Calu3 (cell line): ENCODE measurements at regions of chr20 and their contacts with region 1.

Region 1: DNA sequence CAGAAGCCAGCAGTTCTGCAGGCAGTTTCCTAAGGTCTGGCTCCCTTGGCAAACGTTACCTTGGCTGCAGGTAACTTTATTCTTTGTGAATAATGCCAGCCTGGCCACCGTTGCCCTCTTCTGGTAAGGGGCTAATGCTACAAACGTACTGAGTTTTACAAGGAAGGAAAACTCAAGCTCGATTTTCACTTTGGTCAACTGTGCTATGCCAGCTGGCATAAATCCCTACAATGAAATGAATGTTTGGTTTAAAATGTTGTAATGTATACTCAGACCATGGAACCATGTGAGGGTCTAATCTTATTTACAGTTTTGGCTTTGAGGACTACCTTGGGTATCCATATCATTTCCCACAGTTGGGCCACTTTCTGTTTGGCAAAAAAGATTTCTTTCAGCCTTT is 101.4 kb downstream of the SLX4IP start:
- DNase-seq: peak; percentile 35
- H3K4me3 Mint-ChIP-seq: no peak overlapping the region
- H3K27ac Mint-ChIP-seq: no peak overlapping the region
- H3K4me1 Mint-ChIP-seq: peaks cover 16% of the 10 kb centered on the region
- H3K27me3 Mint-ChIP-seq: no peaks in the 10 kb centered on the region
- CTCF ChIP-seq: peak; percentile 23

Region 2: DNA sequence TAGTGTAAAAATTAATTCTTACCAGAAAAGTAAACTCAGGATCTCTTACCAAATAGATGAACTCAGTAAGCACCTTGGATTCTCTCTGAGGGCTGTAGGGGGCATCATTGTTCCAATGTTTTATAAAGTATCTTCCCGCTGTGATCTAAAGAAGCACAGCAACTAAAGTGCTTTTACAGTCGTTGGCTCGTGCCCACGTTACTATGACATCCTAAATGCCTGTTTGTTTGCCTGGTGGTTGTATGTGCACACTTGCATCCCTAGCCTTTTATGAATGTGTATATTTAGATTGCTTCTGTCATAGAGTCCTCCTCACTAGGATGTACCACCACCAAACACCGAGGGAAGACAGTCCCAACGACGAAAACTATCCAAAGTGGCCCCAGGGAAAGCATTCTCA is 66.9 kb before region 1 on chr20:
- CTCF ChIA-PET with region 1: no interaction called
- intact Hi-C with region 1: loop called (anchors 2 kb)
- DNase-seq: peak; percentile 11
- H3K4me3 Mint-ChIP-seq: no peak overlapping the region
- H3K27ac Mint-ChIP-seq: no peak overlapping the region
- H3K4me1 Mint-ChIP-seq: peaks cover 16% of the 10 kb centered on the region
- H3K27me3 Mint-ChIP-seq: no peaks in the 10 kb centered on the region
- CTCF ChIP-seq: no peak

Region 3: GRCh38 chr20:10603971-10604864 is 67.7 kb after region 1 on chr20:
- CTCF ChIA-PET with region 1: no interaction called
- intact Hi-C with region 1: no loop called
- DNase-seq: peak; percentile 23
- H3K4me3 Mint-ChIP-seq: no peak overlapping the region
- H3K27ac Mint-ChIP-seq: peak overlapping the region; percentile 16
- H3K4me1 Mint-ChIP-seq: peaks cover 13% of the 10 kb centered on the region
- H3K27me3 Mint-ChIP-seq: no peaks in the 10 kb centered on the region
- CTCF ChIP-seq: no peak